ENCODE measurements at regions of chr1 and their contacts with region 1.

Region 1: DNA sequence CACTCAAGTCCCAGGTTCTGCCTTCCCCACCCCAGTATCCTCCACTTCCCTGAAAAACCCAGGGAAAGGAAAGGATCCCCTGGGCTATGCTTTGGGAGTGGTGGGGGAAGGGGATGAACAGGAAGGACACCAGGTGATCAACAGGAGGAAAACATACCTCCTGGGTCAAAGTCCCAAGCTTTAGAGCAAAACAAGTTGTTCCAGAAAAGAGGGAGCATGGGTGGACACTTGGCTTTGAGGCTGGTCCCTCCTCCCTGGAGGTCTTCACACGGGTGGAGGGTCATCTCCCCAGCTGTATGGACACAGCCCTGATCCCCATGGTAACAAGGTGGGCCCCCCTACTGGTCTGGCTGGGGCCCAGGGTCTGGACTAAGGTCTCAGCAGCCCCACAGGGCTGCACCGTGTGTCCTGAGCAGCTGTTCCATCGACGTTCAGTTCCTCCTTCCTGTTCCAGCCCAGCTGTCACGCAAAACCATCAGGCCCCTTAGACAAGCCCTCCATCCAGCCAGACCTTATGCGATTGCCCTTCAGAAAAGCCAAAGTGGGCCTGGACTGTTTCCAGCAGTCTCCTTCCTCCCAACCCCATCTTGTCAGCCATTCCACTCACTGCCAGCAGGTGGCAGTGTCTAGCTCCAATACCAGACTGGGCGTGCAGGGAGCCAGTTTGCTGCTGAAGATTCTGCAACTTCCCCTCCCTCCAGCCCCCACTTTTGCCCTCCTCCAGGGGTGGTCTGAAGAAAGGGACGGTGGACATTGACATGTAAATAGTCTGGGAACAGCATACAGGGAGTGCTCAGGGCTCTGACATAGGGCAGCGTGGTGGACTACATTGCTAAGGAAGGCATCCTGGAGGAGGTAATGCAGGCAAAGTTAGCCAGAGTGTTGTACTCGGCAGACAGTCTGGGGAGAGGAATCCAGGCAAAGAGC is 2.9 kb upstream of the PDZK1IP1 start:
- DNase-seq: peak; percentile 35 to 74 (median 46)
- H3K4me3 ChIP-seq: no peak overlapping the region
- H3K4me3 Mint-ChIP-seq: no peak overlapping the region
- H3K27ac ChIP-seq: no peak overlapping the region
- H3K27ac Mint-ChIP-seq: no peak overlapping the region
- H3K4me1 ChIP-seq: no peaks in the 10 kb centered on the region
- H3K4me1 Mint-ChIP-seq: peaks cover 4 to 5% (median 4%) of the 10 kb centered on the region in 3 donors
- H3K27me3 ChIP-seq: no peaks in the 10 kb centered on the region
- H3K27me3 Mint-ChIP-seq: peaks cover 10 to 18% of the 10 kb centered on the region in 2 donors

Region 2: DNA sequence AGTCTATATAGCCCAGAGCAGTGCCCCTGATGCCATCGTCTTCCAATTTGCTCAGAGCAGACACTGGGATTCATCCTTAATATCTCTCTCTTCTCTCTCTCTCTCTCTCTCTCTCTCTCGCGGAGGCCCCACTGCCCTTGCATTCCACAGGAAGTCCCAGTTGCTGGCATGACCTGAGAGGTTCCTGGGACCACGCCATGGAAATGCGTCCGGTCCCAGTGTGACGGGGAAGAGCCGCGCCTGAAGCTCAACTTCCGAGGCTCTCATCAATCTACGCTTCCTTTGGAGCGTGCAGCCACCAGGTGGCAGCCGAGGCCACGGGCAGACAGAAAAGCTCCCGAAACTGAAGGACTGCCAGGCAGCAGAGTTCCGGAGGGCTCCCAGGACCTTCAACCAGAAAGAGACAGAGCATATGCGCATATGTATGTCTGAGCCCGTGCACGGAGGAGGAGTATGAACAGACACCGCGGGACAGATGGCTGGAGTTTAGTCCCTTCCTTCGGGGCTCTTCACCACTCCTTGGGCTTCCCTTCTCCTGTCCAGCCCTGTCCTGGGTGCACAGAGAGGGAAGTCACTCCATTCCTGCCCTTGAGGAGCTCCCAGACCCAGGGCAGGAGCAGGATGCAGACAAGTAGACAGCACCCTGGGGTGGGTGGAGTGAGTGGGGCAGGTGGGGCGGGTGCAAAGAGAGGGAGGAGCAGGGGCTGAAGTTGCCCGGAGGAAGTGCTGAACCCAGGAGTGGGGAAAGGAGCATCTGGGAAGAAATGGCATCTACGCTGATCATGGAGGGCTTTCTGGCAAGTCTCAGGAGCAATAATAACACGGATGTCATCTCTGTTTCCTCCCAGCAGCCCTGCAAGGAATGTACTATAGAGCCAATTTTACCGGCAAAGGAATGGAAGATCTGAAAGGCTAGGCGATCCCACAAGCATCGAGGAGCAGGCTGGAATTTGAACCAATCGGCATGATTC is 13.4 kb before region 1 on chr1:
- CTCF ChIA-PET with region 1: interaction called, 43 read pairs
- POLR2A ChIA-PET with region 1: no interaction called
- DNase-seq: peak; percentile 40 to 72 (median 49)
- H3K4me3 ChIP-seq: peak overlapping the region; percentile 36
- H3K4me3 Mint-ChIP-seq: peak overlapping the region; percentile 10 to 89 (median 81)
- H3K27ac ChIP-seq: peak overlapping the region; percentile 76
- H3K27ac Mint-ChIP-seq: peak overlapping the region in 4 of 8 donors; percentile 14 to 82 (median 50)
- H3K4me1 ChIP-seq: peaks cover 6% of the 10 kb centered on the region
- H3K4me1 Mint-ChIP-seq: peaks cover 12 to 18% (median 18%) of the 10 kb centered on the region in 3 donors
- H3K27me3 ChIP-seq: peaks cover 7% of the 10 kb centered on the region
- H3K27me3 Mint-ChIP-seq: peaks cover 21 to 54% of the 10 kb centered on the region in 2 donors

Region 3: GRCh38 chr1:47235241-47235681 is 42.5 kb after region 1 on chr1:
- CTCF ChIA-PET with region 1: no interaction called
- POLR2A ChIA-PET with region 1: no interaction called
- DNase-seq: no peak
- H3K4me3 ChIP-seq: no peak overlapping the region
- H3K4me3 Mint-ChIP-seq: no peak overlapping the region
- H3K27ac ChIP-seq: no peak overlapping the region
- H3K27ac Mint-ChIP-seq: no peak overlapping the region
- H3K4me1 ChIP-seq: peaks cover 15% of the 10 kb centered on the region
- H3K4me1 Mint-ChIP-seq: peaks cover 20 to 34% (median 32%) of the 10 kb centered on the region in 3 donors
- H3K27me3 ChIP-seq: peaks cover 27% of the 10 kb centered on the region
- H3K27me3 Mint-ChIP-seq: peaks cover 33 to 70% of the 10 kb centered on the region in 2 donors

Region 4: GRCh38 chr1:47262787-47263413 is 70.2 kb after region 1 on chr1:
- CTCF ChIA-PET with region 1: interaction called, 16 read pairs
- POLR2A ChIA-PET with region 1: no interaction called
- DNase-seq: peak in 1 of 5 donors; percentile 3
- H3K4me3 ChIP-seq: no peak overlapping the region
- H3K4me3 Mint-ChIP-seq: no peak overlapping the region
- H3K27ac ChIP-seq: no peak overlapping the region
- H3K27ac Mint-ChIP-seq: no peak overlapping the region
- H3K4me1 ChIP-seq: no peaks in the 10 kb centered on the region
- H3K4me1 Mint-ChIP-seq: no peaks in the 10 kb centered on the region
- H3K27me3 ChIP-seq: no peaks in the 10 kb centered on the region
- H3K27me3 Mint-ChIP-seq: no peaks in the 10 kb centered on the region

Measured in CD8-positive, alpha-beta memory T cell (primary cell).